ENCODE measurements at regions of chr1 and their contacts with region 1.

Region 1: DNA sequence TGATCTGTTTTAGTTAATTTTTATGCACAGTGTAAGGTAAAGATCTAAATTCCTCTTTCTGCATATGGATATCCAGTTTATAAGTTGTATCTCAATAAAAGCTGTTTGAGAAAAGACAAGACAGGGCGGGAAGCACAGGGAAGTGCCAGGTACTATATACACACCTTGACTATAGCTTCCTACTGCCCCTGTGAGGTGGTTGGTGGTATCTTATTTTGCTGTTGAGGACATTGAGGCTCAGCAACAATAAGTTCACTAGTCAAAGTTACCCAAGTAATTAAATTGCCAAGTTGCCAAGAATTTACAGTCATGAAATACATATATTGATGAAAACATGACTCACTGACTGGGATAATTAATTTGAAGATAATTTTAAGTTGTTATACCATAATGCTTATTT is 109.1 kb downstream of the CD247 start:
- DNase-seq: peak; percentile 56
- ATAC-seq: 0 out of 2 replicates have a peak, but pooled peaks have one; percentile 34
- H3K4me3 ChIP-seq: no peak overlapping the region
- H3K27ac ChIP-seq: no peak overlapping the region
- H3K4me1 ChIP-seq: peaks cover 15% of the 10 kb centered on the region
- H3K27me3 ChIP-seq: no peaks in the 10 kb centered on the region
- CTCF ChIP-seq: peak; percentile 64

Region 2: DNA sequence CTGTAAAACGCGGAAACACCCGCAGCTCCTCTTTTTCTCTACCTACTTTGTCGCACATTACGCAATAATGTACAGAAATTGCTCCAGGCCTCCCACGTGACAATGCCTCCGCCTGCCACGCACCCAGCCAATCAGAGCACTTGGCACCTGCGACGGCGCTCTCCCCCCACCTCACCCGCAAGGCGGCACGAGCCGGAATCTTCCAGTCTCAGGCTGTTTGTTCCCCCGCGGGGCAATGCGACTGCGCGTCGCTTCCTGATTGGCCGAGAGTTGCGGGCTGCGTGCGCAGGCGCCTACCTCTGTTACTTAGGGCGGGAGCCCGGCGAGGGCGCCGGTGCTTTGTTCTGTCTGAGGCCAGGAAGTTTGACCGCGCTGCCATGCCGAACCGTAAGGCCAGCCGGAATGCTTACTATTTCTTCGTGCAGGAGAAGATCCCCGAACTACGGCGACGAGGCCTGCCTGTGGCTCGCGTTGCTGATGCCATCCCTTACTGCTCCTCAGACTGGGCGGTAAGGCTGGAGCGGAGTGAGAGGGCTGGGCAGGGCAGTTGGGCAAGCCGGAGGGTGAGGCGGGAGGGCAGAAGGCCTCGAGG is 420.1 kb before region 1 on chr1 and contains the start of gene MAEL:
- CTCF ChIA-PET with region 1: no interaction called
- POLR2A ChIA-PET with region 1: no interaction called
- intact Hi-C with region 1: no loop called
- DNase-seq: no peak
- ATAC-seq: no peak
- H3K4me3 ChIP-seq: no peak within 1 kb of the TSS
- H3K27ac ChIP-seq: no peak within 1 kb of the TSS
- H3K4me1 ChIP-seq: no peaks in the 10 kb centered on the region
- H3K27me3 ChIP-seq: peaks cover 78% of the 10 kb centered on the region
- CTCF ChIP-seq: no peak
- total RNA-seq, gene MAEL: not detected in 2 replicates

Region 3: DNA sequence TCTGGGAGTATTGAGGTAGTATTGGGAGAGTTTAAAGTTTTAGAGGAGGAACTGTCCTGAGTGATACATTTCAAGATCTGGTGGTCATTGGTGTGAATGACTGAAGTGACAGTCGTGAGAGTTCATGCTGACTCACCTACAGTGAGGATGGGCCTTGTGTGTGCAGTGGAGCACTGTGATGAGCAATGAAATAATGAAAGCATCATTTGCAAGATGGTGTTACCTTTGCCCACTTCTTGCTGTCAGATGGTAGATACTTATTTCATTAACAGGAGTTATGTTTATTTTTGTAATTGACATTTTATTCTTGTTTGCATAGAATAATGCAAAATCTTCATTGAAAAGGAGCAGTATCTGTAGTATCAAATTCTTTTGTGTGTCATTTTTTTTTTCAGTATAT is 159.5 kb before region 1 on chr1:
- CTCF ChIA-PET with region 1: no interaction called
- POLR2A ChIA-PET with region 1: no interaction called
- intact Hi-C with region 1: no loop called
- DNase-seq: peak; percentile 41
- ATAC-seq: peak; percentile 37; the same call in 1 of the 2 replicates
- H3K4me3 ChIP-seq: no peak overlapping the region
- H3K27ac ChIP-seq: no peak overlapping the region
- H3K4me1 ChIP-seq: no peaks in the 10 kb centered on the region
- H3K27me3 ChIP-seq: no peaks in the 10 kb centered on the region
- CTCF ChIP-seq: no peak

Region 4: DNA sequence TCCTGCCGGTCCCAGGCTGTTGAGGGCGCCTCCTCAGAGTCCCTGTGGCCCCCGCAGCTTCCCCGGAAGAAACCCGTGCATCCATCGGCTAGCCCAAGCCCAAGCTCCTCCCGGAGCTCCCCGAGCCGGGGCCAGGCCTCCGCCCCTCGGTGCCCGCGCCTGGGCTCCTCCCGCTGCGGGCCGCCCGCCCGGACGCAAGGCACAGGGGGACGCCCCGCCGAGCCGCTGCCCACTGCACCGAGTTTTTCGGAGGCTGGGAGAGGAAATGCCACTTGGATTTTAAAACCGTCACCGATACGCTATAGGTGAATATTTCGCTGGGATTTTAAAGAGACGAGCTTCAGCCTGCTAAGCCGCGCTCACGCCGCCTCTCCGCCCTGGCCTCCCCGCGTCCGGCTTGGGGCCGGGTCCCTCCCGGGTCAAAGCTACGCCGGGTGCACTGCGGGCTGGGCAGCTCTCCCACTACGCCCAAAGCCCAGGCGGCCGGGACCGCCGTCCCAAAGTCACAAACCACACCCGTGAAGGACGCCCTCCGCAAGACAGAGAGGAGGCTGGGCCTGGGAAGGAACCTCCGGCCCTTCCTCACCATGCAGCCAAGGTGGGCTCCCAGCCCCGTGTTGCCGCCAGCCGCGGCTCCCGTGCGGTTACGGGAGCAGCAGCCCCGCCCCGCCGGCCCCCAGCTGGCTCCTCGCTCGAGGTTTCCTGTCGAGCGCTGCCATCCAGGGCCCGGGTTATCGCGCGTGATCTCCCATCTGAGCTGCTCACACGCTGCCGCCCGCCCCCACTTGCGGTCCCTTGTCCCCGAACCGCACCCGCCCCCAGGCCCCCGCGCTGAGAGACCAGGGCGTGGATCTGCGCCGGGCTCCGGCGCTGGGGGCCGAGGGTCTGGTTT is 46.0 kb after region 1 on chr1:
- CTCF ChIA-PET with region 1: no interaction called
- POLR2A ChIA-PET with region 1: interaction called, 12 read pairs
- intact Hi-C with region 1: no loop called
- DNase-seq: peak; percentile 61
- ATAC-seq: peak; percentile 73
- H3K4me3 ChIP-seq: peak overlapping the region; percentile 89
- H3K27ac ChIP-seq: no peak overlapping the region
- H3K4me1 ChIP-seq: peaks cover 6% of the 10 kb centered on the region; the same call in 1 of the 2 replicates
- H3K27me3 ChIP-seq: no peaks in the 10 kb centered on the region; the same call in 1 of the 2 replicates
- CTCF ChIP-seq: no peak